Prostate gland (tissue), 2 donors: ENCODE measurements at regions of chr19 and their contacts with region 1.

Region 1: GRCh38 chr19:37309834-37310575 is 60.9 kb upstream of the ZNF527 start:
- DNase-seq: no peak
- H3K4me3 ChIP-seq: no peak overlapping the region
- H3K27ac ChIP-seq: no peak overlapping the region
- H3K4me1 ChIP-seq: no peaks in the 10 kb centered on the region
- H3K27me3 ChIP-seq: no peaks in the 10 kb centered on the region
- CTCF ChIP-seq: no peak
- POLR2A ChIP-seq: no peak

Region 2: GRCh38 chr19:37413243-37414084 is 103.5 kb after region 1 on chr19:
- intact Hi-C with region 1: no loop called
- DNase-seq: no peak
- H3K4me3 ChIP-seq: no peak overlapping the region
- H3K27ac ChIP-seq: no peak overlapping the region
- H3K4me1 ChIP-seq: no peaks in the 10 kb centered on the region
- H3K27me3 ChIP-seq: no peaks in the 10 kb centered on the region
- CTCF ChIP-seq: no peak
- POLR2A ChIP-seq: no peak

Region 3: GRCh38 chr19:37594304-37594981 is 284.4 kb after region 1 on chr19 and contains the starts of genes ZNF540 and ZNF571:
- intact Hi-C with region 1: loop called (anchors 10 kb)
- DNase-seq: peak; percentile 97
- H3K4me3 ChIP-seq: peak within 1 kb of the TSS; percentile 47 to 73
- H3K27ac ChIP-seq: peak within 1 kb of the TSS; percentile 94 to 96
- H3K4me1 ChIP-seq: no peaks in the 10 kb centered on the region
- H3K27me3 ChIP-seq: no peaks in the 10 kb centered on the region
- CTCF ChIP-seq: no peak
- POLR2A ChIP-seq: peak; percentile 72
- total RNA-seq, gene ZNF540: 2.9 to 3.1 TPM
- total RNA-seq, gene ZNF571: 4.5 to 34.2 TPM